ENCODE measurements at regions of chr14 and their contacts with region 1.

Region 1: GRCh38 chr14:20855652-20856291 is 35.4 kb upstream of the RNASE3 start:
- DNase-seq: peak; percentile 65 to 83 (median 76)
- ATAC-seq: peak; percentile 96
- H3K4me3 ChIP-seq: no peak overlapping the region
- H3K27ac ChIP-seq: no peak overlapping the region
- H3K4me1 ChIP-seq: peaks cover 11% of the 10 kb centered on the region
- H3K27me3 ChIP-seq: no peaks in the 10 kb centered on the region
- CTCF ChIP-seq: peak; percentile 61 to 95 (median 92)
- POLR2A ChIP-seq: no peak

Region 2: DNA sequence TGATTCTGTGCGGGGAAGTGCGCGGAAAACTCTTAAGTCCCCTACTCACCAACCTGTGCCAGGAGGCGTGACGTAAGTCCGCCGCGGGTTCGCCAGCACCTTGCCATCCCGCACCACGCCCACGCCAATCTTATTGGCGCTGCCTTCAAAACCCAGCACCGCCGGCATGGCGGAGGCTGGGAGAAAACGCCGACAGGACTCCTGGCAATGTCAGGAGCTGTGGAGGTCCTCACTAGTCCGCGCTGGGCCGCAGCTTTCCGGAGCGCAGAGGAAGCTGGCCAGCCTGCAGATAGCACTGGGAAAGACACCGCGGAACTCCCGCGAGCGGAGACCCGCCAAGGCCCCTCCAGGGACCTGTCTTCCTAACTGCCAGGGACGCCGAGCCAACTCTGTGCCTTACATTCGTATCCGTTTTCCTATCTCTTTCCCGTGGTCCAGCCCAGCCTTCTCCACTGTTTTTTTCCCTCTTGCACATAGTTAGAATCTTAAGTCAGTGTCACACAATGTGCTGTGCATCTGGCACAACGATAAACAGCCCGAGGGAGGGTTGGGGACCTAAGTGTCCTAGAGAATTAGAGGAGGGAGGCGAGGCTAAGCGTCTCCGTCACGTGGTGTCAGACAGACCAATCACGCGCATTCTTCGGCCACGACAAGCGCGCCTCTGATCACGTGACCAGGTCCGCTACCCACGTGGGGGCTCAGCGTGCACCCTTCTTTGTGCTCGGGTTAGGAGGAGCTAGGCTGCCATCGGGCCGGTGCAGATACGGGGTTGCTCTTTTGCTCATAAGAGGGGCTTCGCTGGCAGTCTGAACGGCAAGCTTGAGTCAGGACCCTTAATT is 401.0 kb before region 1 on chr14 and contains the starts of genes APEX1 and OSGEP:
- intact Hi-C with region 1: no loop called
- DNase-seq: peak; percentile 98 to 99 (median 99)
- ATAC-seq: peak; percentile 94
- H3K4me3 ChIP-seq: peak within 1 kb of the TSS; percentile 82 to 95
- H3K27ac ChIP-seq: peak within 1 kb of the TSS; percentile 90 to 97 (median 96)
- H3K4me1 ChIP-seq: peaks cover 38% of the 10 kb centered on the region
- H3K27me3 ChIP-seq: no peaks in the 10 kb centered on the region
- CTCF ChIP-seq: peak in 4 of 7 experiments; percentile 5 to 23 (median 15)
- POLR2A ChIP-seq: peak; percentile 57 to 93 (median 93)
- total RNA-seq, gene APEX1: 86.7 to 101 TPM
- total RNA-seq, gene OSGEP: 36.1 to 53.4 TPM

Region 3: GRCh38 chr14:20681348-20682126 is 174.2 kb before region 1 on chr14:
- intact Hi-C with region 1: no loop called
- DNase-seq: peak; percentile 88 to 92 (median 90)
- ATAC-seq: peak; percentile 45
- H3K4me3 ChIP-seq: peak overlapping the region in 1 of 2 donors; percentile 42
- H3K27ac ChIP-seq: peak overlapping the region; percentile 94 to 99 (median 97)
- H3K4me1 ChIP-seq: peaks cover 35% of the 10 kb centered on the region
- H3K27me3 ChIP-seq: no peaks in the 10 kb centered on the region
- CTCF ChIP-seq: no peak
- POLR2A ChIP-seq: no peak

Region 4: GRCh38 chr14:20697273-20698017 is 158.3 kb before region 1 on chr14:
- intact Hi-C with region 1: loop called (anchors 5 kb)
- DNase-seq: peak; percentile 64 to 79 (median 76)
- ATAC-seq: peak; percentile 87
- H3K4me3 ChIP-seq: no peak overlapping the region
- H3K27ac ChIP-seq: no peak overlapping the region
- H3K4me1 ChIP-seq: no peaks in the 10 kb centered on the region
- H3K27me3 ChIP-seq: no peaks in the 10 kb centered on the region
- CTCF ChIP-seq: peak; percentile 35 to 83 (median 79)
- POLR2A ChIP-seq: no peak

Region 5: GRCh38 chr14:20969341-20969740 is 113.6 kb after region 1 on chr14:
- intact Hi-C with region 1: loop called (anchors 10 kb)
- DNase-seq: no peak
- ATAC-seq: no peak
- H3K4me3 ChIP-seq: no peak overlapping the region
- H3K27ac ChIP-seq: no peak overlapping the region
- H3K4me1 ChIP-seq: peaks cover 12% of the 10 kb centered on the region
- H3K27me3 ChIP-seq: no peaks in the 10 kb centered on the region
- CTCF ChIP-seq: no peak
- POLR2A ChIP-seq: no peak

Region 6: DNA sequence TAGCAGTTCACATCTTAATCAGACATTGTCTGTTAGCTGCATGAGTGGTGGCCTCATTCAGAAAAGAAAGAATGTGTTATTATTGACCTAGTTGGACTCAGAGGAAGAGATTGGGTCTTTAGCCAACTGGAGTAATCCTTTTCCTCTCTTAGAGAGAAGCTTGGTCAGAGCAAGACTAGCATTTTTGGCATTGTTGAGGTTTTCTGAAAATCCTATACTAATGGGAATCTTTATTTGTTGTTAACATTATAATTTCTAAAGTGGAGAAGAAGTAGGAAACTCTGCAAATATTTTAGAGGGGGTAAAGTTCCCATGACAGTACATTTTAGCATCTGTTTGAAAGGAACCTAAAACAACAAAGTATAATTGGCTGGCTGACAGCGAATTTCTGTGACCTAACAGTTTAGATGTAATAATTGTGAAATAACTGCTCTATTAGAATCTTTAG is 630.9 kb after region 1 on chr14:
- intact Hi-C with region 1: no loop called
- DNase-seq: no peak
- ATAC-seq: no peak
- H3K4me3 ChIP-seq: no peak overlapping the region
- H3K27ac ChIP-seq: no peak overlapping the region
- H3K4me1 ChIP-seq: no peaks in the 10 kb centered on the region
- H3K27me3 ChIP-seq: no peaks in the 10 kb centered on the region
- CTCF ChIP-seq: no peak
- POLR2A ChIP-seq: no peak

Measured in body of pancreas (tissue), 4 donors.